ENCODE measurements at regions of chr7 and their contacts with region 1.

Region 1: GRCh38 chr7:151808400-151809183 is 68.3 kb downstream of the PRKAG2 start:
- H3K4me3 Mint-ChIP-seq: no peak overlapping the region
- H3K27ac Mint-ChIP-seq: peak overlapping the region; percentile 80
- H3K4me1 Mint-ChIP-seq: peaks cover 79% of the 10 kb centered on the region
- H3K27me3 Mint-ChIP-seq: no peaks in the 10 kb centered on the region

Region 2: DNA sequence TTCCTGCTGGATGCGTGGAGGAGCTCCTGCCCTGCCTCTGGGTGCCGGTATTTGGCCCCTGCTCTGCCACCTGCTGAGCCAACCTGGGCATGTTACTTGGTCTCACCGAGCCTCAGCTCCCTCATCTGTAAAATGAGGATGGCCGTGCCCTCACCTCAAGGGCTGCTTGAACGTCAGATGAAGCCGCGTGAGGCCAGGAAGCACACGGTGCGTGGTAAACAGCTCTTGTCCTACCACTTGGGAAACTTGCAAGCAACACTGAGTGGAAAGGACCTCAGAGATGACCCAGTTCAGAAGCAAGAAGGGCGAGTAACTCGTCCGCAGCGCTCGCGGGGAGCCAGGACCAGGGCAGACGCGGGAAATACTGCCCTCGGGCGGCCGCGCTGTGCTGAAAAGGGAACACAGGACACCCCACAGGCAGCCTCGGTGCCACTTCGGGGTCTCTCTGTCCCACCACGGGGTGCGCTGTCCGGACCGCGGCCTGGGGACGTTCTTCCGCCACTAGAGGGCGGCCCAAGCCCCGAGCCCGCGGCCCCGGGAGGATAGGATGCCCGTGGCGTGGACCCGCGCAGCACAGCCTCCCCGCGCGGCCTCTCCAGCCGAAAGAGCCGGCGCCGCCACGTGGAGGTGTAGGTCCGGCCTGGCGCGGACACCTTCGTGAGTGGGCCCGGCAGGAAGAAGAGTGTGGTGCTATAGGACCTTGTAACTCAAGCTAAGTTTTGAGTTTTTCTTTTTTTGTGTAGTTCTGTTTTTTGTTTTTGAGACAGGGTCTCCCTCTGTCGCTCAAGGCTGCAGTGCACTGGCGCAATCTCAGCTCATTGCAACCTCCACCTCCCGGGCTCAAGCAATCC is 25.8 kb before region 1 on chr7:
- intact Hi-C with region 1: loop called (anchors 2 kb)
- H3K4me3 Mint-ChIP-seq: peak overlapping the region; percentile 45
- H3K27ac Mint-ChIP-seq: no peak overlapping the region
- H3K4me1 Mint-ChIP-seq: peaks cover 63% of the 10 kb centered on the region
- H3K27me3 Mint-ChIP-seq: no peaks in the 10 kb centered on the region

Region 3: DNA sequence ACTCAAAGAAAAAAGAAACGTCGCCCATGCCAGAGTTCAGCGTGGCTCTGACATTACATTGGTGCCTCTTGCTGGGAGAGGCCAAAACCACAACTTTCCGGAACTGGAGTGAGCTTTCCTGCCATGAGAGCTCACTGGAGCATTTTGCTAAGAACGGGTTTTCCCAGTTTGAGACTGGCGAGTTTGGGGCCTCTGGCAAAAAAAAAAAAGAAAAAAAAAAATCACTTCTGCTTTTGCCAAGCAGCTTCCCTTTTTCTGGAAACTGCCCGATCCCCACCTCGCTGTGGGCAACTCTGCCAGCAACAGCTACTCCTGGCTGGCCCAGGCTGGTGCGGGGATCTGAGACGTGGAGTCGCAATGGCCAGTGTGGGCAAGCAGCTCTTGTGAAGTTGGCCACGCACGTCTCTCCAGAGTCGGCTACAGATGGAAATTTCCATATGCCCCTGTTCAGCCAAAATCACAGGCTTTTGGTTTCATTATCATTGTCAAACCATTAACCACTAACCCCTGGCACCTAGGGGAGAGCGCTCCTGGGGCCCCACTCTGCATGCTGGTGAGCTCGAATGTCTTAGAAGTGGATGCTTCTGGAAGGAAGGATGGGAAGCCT is 42.7 kb after region 1 on chr7:
- intact Hi-C with region 1: loop called (anchors 5 kb)
- H3K4me3 Mint-ChIP-seq: peak overlapping the region; percentile 74
- H3K27ac Mint-ChIP-seq: peak overlapping the region; percentile 99
- H3K4me1 Mint-ChIP-seq: peaks cover 93% of the 10 kb centered on the region
- H3K27me3 Mint-ChIP-seq: no peaks in the 10 kb centered on the region

Measured in dendritic cell treated with granulocyte-macrophage colony-stimulating factor and Interleukin-4, amounts not matched to agents 40 ng/mL and 50 ng/mL, for 4 days (primary cell).